ENCODE measurements at regions of chr14 and their contacts with region 1.

Region 1: DNA sequence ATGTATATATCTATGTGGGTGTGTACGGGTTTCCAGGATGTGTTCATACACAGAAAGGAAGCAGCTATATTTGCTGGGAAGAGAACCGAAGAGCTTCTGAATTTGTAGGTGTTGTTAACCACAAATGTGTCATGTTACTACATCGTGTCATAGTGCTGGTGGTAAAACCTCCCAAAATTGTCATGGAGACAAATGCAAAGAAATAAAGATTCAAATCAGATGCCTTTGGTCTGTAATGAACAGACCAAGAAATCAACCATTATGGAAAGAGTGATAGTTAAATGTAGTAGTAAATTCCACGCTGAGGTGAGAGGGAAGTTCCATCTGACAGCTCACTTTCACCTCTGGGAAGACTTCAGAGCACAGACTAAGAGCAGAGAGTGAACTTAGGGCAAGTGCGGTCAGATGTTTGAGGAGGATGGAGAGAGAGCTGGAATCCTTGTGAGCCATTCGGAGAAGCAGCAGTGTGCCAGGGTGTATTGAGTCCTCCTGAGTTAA is 487.5 kb downstream of the TMEM121 start:
- DNase-seq: peak; percentile 30
- H3K4me3 Mint-ChIP-seq: peak overlapping the region; percentile 19
- H3K27ac Mint-ChIP-seq: peak overlapping the region; percentile 91
- H3K4me1 Mint-ChIP-seq: peaks cover 70% of the 10 kb centered on the region
- H3K27me3 Mint-ChIP-seq: no peaks in the 10 kb centered on the region

Region 2: GRCh38 chr14:105480952-105481801 is 532.8 kb before region 1 on chr14:
- intact Hi-C with region 1: loop called (anchors 2 kb)
- DNase-seq: peak; percentile 86
- H3K4me3 Mint-ChIP-seq: peak overlapping the region; percentile 65
- H3K27ac Mint-ChIP-seq: peak overlapping the region; percentile 98
- H3K4me1 Mint-ChIP-seq: peaks cover 30% of the 10 kb centered on the region
- H3K27me3 Mint-ChIP-seq: peaks cover 22% of the 10 kb centered on the region

Region 3: GRCh38 chr14:105931808-105932483 is 82.0 kb before region 1 on chr14:
- intact Hi-C with region 1: no loop called
- DNase-seq: no peak
- H3K4me3 Mint-ChIP-seq: no peak overlapping the region
- H3K27ac Mint-ChIP-seq: no peak overlapping the region
- H3K4me1 Mint-ChIP-seq: peaks cover 5% of the 10 kb centered on the region
- H3K27me3 Mint-ChIP-seq: peaks cover 41% of the 10 kb centered on the region

Region 4: DNA sequence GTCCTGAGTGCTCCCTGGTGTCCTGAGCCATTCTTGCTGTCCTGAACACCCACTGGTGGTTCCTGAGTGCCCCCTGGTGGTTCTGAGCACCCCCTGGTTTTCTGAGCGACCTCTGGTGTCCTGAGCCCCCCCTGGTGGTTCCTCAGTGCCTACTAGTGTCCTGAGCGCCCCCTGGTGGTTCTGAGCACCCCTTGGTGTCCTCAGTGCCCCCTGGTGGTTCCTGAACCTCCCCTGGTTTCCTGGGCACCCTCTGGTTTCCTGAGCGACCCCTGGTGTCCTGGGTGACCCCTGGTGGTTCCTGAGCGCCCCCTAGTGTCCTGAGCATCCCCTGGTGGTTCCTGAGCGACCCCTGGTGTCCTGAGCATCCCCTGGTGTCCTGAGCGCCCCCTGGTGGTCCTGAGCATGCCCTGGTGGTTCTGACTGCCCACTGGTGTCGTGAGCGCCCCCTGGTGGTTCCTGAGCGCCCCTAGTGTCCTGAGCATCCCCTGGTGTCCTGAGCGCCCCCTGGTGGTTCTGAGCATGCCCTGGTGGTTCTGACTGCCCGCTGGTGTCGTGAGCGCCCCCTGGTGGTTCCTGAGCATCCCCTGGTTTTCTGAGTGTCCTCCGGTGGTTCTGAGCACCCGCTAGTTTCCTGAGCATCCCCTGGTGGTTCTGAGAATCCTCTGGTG is 14.4 kb before region 1 on chr14:
- intact Hi-C with region 1: loop called (anchors 2 kb)
- DNase-seq: peak; percentile 85
- H3K4me3 Mint-ChIP-seq: no peak overlapping the region
- H3K27ac Mint-ChIP-seq: peak overlapping the region; percentile 71
- H3K4me1 Mint-ChIP-seq: peaks cover 43% of the 10 kb centered on the region
- H3K27me3 Mint-ChIP-seq: no peaks in the 10 kb centered on the region

Region 5: GRCh38 chr14:106044949-106045600 is 31.1 kb after region 1 on chr14:
- intact Hi-C with region 1: loop called (anchors 1 kb)
- DNase-seq: peak; percentile 69
- H3K4me3 Mint-ChIP-seq: no peak overlapping the region
- H3K27ac Mint-ChIP-seq: peak overlapping the region; percentile 20
- H3K4me1 Mint-ChIP-seq: peaks cover 12% of the 10 kb centered on the region
- H3K27me3 Mint-ChIP-seq: peaks cover 6% of the 10 kb centered on the region

Region 6: DNA sequence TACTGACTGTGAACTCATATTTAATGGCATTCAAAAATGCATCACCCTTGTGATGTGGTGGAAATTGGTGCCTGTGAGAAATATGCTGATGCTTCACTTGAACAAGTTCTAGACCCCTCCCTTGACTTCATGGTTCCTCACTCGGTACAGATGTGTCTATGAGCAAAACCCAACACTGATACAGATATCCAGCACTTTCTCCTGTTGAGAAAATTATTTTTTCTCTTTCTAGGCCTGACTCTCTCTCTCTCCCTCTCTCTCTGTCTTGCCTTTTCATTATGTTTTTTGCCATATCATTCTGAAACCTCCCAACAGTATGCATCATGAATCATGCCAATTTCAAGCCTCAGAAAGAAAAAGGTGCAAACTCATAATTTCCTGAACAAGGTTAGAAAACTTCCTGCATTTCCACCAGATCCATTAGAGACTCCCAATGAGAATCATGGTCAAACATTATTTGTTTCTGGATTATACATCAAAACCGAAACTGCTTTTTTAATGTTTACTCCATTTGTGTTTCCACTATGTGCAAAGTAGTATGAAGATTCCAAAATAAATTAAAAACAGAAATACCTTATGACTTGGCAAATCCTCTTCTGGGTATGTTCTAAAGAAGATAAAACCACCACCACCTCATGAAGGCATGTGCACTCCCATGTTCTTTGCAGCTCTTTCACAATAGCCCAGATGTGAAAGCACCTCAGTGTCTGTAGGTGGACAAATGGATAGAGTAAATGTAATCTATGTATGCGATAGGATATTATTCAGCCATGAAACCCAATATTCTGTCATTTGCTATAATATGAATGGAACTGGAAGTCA is 56.1 kb after region 1 on chr14:
- intact Hi-C with region 1: loop called (anchors 1 kb)
- DNase-seq: no peak
- H3K4me3 Mint-ChIP-seq: no peak overlapping the region
- H3K27ac Mint-ChIP-seq: peak overlapping the region; percentile 54
- H3K4me1 Mint-ChIP-seq: peaks cover 24% of the 10 kb centered on the region
- H3K27me3 Mint-ChIP-seq: peaks cover 14% of the 10 kb centered on the region

Region 7: GRCh38 chr14:106459971-106460730 is 446.2 kb after region 1 on chr14:
- intact Hi-C with region 1: no loop called
- DNase-seq: peak; percentile 45
- H3K4me3 Mint-ChIP-seq: no peak overlapping the region
- H3K27ac Mint-ChIP-seq: no peak overlapping the region
- H3K4me1 Mint-ChIP-seq: peaks cover 5% of the 10 kb centered on the region
- H3K27me3 Mint-ChIP-seq: peaks cover 19% of the 10 kb centered on the region